B cell (primary cell): ENCODE measurements at regions of chr5 and their contacts with region 1.

Region 1: GRCh38 chr5:14108170-14108996 is 34.8 kb upstream of the TRIO start:
- DNase-seq: peak; percentile 83
- ATAC-seq: peak; percentile 95
- H3K4me3 ChIP-seq: peak overlapping the region in 3 of 5 experiments; percentile 5 to 22 (median 17)
- H3K4me3 Mint-ChIP-seq: peak overlapping the region; percentile 77
- H3K27ac ChIP-seq: no peak overlapping the region
- H3K27ac Mint-ChIP-seq: peak overlapping the region; percentile 11
- H3K4me1 ChIP-seq: peaks cover 20 to 24% of the 10 kb centered on the region in 2 donors
- H3K4me1 Mint-ChIP-seq: peaks cover 39% of the 10 kb centered on the region
- H3K27me3 ChIP-seq: no peaks in the 10 kb centered on the region
- H3K27me3 Mint-ChIP-seq: no peaks in the 10 kb centered on the region
- CTCF ChIP-seq: peak; percentile 81

Region 2: DNA sequence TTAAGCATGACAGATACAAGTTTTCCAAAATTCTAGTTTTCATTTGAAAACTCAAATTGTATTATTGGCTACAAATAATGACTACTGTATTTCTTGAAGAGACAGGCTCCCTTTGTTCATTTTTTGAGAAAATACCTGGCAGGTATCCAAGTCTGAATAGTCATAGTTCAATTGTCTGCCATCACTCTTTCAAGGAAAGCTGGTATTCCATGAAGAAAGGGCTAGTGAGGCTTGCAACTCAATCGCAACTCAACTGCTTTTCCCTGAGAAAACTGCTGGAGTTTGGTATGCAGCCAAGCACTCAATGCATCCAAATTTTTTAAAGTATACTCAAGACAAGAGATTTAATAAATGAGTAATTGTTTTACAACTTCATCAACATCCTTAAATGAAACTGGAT is 26.6 kb before region 1 on chr5:
- CTCF ChIA-PET with region 1: no interaction called
- POLR2A ChIA-PET with region 1: no interaction called
- intact Hi-C with region 1: no loop called
- DNase-seq: no peak
- ATAC-seq: no peak
- H3K4me3 ChIP-seq: no peak overlapping the region
- H3K4me3 Mint-ChIP-seq: no peak overlapping the region
- H3K27ac ChIP-seq: no peak overlapping the region
- H3K27ac Mint-ChIP-seq: no peak overlapping the region
- H3K4me1 ChIP-seq: no peaks in the 10 kb centered on the region
- H3K4me1 Mint-ChIP-seq: no peaks in the 10 kb centered on the region
- H3K27me3 ChIP-seq: peaks cover 0 to 14% (median 4%) of the 10 kb centered on the region in 4 experiments
- H3K27me3 Mint-ChIP-seq: peaks cover 14% of the 10 kb centered on the region
- CTCF ChIP-seq: no peak

Region 3: GRCh38 chr5:14156650-14157493 is 48.5 kb after region 1 on chr5:
- CTCF ChIA-PET with region 1: interaction called, 13 read pairs
- POLR2A ChIA-PET with region 1: interaction called, 4 read pairs
- intact Hi-C with region 1: no loop called
- DNase-seq: peak; percentile 48
- ATAC-seq: peak; percentile 60
- H3K4me3 ChIP-seq: peak overlapping the region in 1 of 5 experiments; percentile 49
- H3K4me3 Mint-ChIP-seq: no peak overlapping the region
- H3K27ac ChIP-seq: peak overlapping the region; percentile 83 to 91
- H3K27ac Mint-ChIP-seq: no peak overlapping the region
- H3K4me1 ChIP-seq: peaks cover 53 to 78% of the 10 kb centered on the region in 2 donors
- H3K4me1 Mint-ChIP-seq: peaks cover 44% of the 10 kb centered on the region
- H3K27me3 ChIP-seq: no peaks in the 10 kb centered on the region
- H3K27me3 Mint-ChIP-seq: no peaks in the 10 kb centered on the region
- CTCF ChIP-seq: no peak

Region 4: DNA sequence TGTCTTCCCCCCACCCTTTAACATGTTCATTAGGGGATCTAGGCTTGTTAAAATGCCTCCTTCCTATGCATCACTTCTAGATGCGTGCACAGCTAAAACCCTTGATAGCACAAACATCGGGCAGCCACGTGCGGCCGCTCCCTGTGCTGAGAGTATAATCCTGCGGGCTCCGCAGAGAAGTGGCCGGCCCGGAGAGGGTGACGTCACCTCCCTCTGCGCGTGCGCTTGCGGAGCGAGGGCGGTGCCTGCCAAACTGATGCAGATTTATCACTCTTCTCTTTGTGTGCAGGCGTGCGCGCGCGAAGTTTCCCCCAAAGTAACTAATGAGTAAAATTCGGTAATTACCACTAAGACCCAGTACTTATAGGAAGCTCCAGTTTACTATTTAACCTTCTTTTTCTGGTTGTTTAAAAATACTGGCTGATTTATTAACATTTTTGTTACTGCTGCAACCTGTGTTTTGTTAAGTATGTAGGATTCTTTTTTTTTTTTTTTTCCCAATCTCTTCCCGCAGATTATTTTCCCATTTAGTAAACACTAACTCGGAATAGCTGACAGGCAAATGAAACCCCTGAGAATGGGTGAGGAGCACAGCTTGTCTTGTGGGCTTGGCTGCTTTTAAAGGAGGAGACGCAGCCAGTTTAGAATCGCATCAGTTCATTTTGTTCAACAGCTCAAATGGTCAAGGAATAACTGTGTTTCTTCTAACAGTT is 156.4 kb after region 1 on chr5:
- CTCF ChIA-PET with region 1: interaction called, 93 read pairs
- POLR2A ChIA-PET with region 1: interaction called, 3 read pairs
- intact Hi-C with region 1: no loop called
- DNase-seq: peak; percentile 89
- ATAC-seq: peak; percentile 97
- H3K4me3 ChIP-seq: peak overlapping the region; percentile 5 to 60 (median 32)
- H3K4me3 Mint-ChIP-seq: peak overlapping the region; percentile 82
- H3K27ac ChIP-seq: peak overlapping the region in 1 of 2 donors; percentile 21
- H3K27ac Mint-ChIP-seq: peak overlapping the region; percentile 88
- H3K4me1 ChIP-seq: peaks cover 22 to 23% of the 10 kb centered on the region in 2 donors
- H3K4me1 Mint-ChIP-seq: peaks cover 74% of the 10 kb centered on the region
- H3K27me3 ChIP-seq: no peaks in the 10 kb centered on the region
- H3K27me3 Mint-ChIP-seq: no peaks in the 10 kb centered on the region
- CTCF ChIP-seq: no peak

Region 5: DNA sequence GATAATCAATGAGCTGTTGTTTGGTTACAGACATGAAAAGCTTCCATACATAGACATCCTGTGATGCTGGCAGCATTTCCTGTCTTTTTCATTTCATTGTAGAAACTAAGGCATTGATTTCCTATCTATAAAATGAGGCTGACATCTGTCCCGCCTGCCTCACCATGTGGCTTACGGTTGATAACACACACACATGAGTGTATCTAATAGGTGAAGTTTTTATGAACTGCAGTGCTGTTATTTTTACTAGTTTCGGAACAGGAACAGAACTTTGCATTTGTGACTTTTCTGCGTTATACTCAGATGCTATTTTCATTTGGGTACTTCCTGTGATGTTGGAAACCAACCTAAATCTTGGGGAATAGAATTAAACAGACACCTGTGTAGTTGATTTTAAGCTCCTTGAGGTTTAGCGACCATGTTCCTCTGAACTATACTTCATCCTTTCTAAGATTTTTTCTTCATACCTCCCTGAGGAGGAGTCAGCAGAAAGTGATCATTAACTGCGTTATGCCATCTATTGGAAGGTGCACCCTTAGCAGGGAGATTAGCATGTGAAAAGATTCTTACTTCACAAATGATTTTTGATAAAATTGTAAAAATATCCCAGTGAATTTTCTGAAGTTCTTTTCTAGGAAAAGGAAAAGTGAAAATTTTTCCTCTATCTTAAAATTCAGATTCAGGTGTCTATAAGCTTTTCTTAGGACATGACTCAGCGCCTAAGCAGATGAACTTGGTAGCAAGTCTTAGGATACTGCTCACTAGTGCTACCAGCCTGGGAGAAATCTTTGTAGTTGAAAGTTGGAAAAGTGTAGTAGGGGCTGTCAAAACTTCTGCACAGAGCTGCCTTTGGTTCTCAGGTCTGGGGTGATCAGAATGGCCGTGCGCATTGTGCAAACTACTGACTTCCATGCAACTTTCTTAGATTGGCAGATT is 169.3 kb after region 1 on chr5:
- CTCF ChIA-PET with region 1: interaction called, 93 read pairs
- POLR2A ChIA-PET with region 1: no interaction called
- intact Hi-C with region 1: no loop called
- DNase-seq: no peak
- ATAC-seq: no peak
- H3K4me3 ChIP-seq: no peak overlapping the region
- H3K4me3 Mint-ChIP-seq: peak overlapping the region; percentile 54
- H3K27ac ChIP-seq: no peak overlapping the region
- H3K27ac Mint-ChIP-seq: no peak overlapping the region
- H3K4me1 ChIP-seq: peaks cover 12 to 15% of the 10 kb centered on the region in 2 donors
- H3K4me1 Mint-ChIP-seq: peaks cover 34% of the 10 kb centered on the region
- H3K27me3 ChIP-seq: no peaks in the 10 kb centered on the region
- H3K27me3 Mint-ChIP-seq: no peaks in the 10 kb centered on the region
- CTCF ChIP-seq: no peak

Region 6: GRCh38 chr5:14326035-14326903 is 217.9 kb after region 1 on chr5:
- CTCF ChIA-PET with region 1: interaction called, 10 read pairs
- POLR2A ChIA-PET with region 1: no interaction called
- intact Hi-C with region 1: no loop called
- DNase-seq: peak; percentile 43
- ATAC-seq: peak; percentile 62
- H3K4me3 ChIP-seq: no peak overlapping the region
- H3K4me3 Mint-ChIP-seq: no peak overlapping the region
- H3K27ac ChIP-seq: no peak overlapping the region
- H3K27ac Mint-ChIP-seq: peak overlapping the region; percentile 11
- H3K4me1 ChIP-seq: peaks cover 29 to 32% of the 10 kb centered on the region in 2 donors
- H3K4me1 Mint-ChIP-seq: peaks cover 37% of the 10 kb centered on the region
- H3K27me3 ChIP-seq: no peaks in the 10 kb centered on the region
- H3K27me3 Mint-ChIP-seq: no peaks in the 10 kb centered on the region
- CTCF ChIP-seq: peak; percentile 36